ENCODE measurements at regions of chrX and their contacts with region 1.

Region 1: GRCh38 chrX:123833387-123833786 is 26.5 kb upstream of the XIAP start:
- DNase-seq: peak; percentile 68 to 77 (median 70)
- ATAC-seq: peak; percentile 97
- H3K4me3 ChIP-seq: no peak overlapping the region
- H3K27ac ChIP-seq: no peak overlapping the region
- H3K4me1 ChIP-seq: no peaks in the 10 kb centered on the region; a peak in 2 of 5 replicates
- H3K27me3 ChIP-seq: no peaks in the 10 kb centered on the region
- CTCF ChIP-seq: peak; percentile 78 to 90 (median 81)
- EP300 ChIP-seq: no peak
- POLR2A ChIP-seq: no peak
- RAD21 ChIP-seq: peak; percentile 90 to 93

Region 2: DNA sequence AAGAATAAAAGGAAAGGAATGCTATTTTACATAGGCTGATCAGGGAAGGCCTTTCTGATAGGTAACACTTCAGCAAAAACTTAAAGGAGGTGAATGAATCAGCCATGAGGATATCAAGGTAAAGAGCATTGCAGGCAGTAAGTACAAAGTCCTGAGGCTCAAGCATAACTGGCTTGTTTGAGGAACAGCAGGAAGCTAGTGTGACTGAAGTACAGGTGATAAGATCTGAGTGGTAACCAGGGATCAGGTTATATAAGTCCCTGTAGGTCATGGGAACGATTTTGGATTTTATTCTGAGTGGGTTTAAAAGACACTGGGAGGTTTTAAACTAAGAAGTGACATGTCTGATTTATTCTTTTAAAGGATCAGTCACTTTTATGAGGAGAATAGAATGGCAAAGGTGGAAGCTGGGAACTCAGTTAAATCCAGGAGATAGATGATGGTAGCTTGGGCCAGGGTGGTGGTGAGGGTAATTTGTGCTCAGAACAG is 53.4 kb before region 1 on chrX:
- CTCF ChIA-PET with region 1: interaction called, 4 read pairs
- POLR2A ChIA-PET with region 1: no interaction called
- in situ Hi-C with region 1: no loop called
- intact Hi-C with region 1: loop called (anchors 2 kb)
- DNase-seq: peak in 2 of 4 experiments; percentile 27 to 34
- ATAC-seq: peak; percentile 47; the same call in 2 of the 3 replicates
- H3K4me3 ChIP-seq: no peak overlapping the region
- H3K27ac ChIP-seq: no peak overlapping the region
- H3K4me1 ChIP-seq: peaks cover 7 to 13% of the 10 kb centered on the region in 2 experiments; a peak in 4 of 5 replicates
- H3K27me3 ChIP-seq: no peaks in the 10 kb centered on the region
- CTCF ChIP-seq: no peak
- EP300 ChIP-seq: no peak
- POLR2A ChIP-seq: no peak
- RAD21 ChIP-seq: no peak

Region 3: DNA sequence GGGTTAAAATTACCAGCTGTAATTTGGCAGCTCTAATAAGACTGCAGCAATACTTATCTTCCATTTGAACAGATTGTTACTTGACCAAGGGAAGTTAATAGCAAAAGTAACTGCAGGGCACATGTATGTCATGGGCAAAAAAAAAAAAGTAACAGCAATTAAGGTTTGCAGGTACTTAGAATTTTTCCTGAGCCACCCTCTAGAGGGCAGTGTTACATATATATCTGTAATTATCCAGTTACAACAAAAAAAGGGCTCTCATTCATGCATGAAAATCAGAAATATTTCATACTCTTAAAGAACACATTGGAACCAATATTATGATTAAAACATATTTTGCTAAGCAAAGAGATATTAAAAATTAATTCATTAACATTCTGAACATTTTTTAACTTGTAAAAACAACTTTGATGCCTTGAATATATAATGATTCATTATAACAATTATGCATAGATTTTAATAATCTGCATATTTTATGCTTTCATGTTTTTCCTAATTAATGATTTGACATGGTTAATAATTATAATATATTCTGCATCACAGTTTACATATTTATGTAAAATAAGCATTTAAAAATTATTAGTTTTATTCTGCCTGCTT is 51.5 kb after region 1 on chrX:
- CTCF ChIA-PET with region 1: interaction called, 3 read pairs
- POLR2A ChIA-PET with region 1: interaction called, 3 read pairs
- in situ Hi-C with region 1: no loop called
- intact Hi-C with region 1: loop called (anchors 5 kb)
- DNase-seq: peak; percentile 26 to 55 (median 29)
- ATAC-seq: peak; percentile 74
- H3K4me3 ChIP-seq: no peak overlapping the region
- H3K27ac ChIP-seq: no peak overlapping the region
- H3K4me1 ChIP-seq: no peaks in the 10 kb centered on the region
- H3K27me3 ChIP-seq: no peaks in the 10 kb centered on the region
- CTCF ChIP-seq: peak in 2 of 3 experiments; percentile 36 to 65; a peak in 3 of 6 replicates
- EP300 ChIP-seq: no peak
- POLR2A ChIP-seq: no peak
- RAD21 ChIP-seq: peak; percentile 34 to 47; a peak in 3 of 4 replicates

Region 4: DNA sequence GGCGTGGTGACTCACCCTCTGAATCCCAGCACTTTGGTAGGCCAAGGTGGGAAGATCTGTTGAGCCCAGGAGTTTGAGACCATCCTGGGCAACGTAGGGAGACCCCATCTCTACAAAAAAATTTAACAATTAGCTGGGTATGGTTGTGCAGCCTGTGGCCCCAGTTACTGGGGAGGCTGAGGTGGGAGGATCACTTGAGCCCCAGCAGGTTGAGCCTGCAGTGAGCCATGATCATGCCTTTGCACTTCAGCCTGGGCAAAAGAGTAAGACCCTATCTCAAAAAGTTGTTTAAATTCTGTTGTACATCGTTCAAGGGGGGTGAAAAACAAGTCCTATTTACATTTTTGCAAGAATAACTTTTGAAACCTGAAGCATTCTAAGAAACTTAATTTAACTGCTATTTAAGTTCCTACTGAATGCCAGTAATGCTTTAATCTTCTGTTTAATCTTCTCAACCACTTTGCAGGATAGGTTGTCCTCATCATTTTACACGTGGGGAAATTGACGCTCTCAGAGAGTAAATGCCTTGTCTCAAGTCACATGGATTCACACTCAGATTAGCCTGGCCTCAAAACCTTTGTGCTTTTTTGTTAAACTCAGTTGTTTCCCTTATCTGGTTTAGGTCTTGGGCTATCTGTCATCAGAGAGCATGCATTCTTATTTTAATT is 135.1 kb after region 1 on chrX:
- CTCF ChIA-PET with region 1: no interaction called
- POLR2A ChIA-PET with region 1: no interaction called
- in situ Hi-C with region 1: loop called (anchors 5 kb)
- intact Hi-C with region 1: no loop called
- DNase-seq: no peak
- ATAC-seq: peak; percentile 5; the same call in 1 of the 3 replicates
- H3K4me3 ChIP-seq: no peak overlapping the region
- H3K27ac ChIP-seq: no peak overlapping the region
- H3K4me1 ChIP-seq: peaks cover 0 to 5% of the 10 kb centered on the region in 2 experiments; a peak in 2 of 5 replicates
- H3K27me3 ChIP-seq: no peaks in the 10 kb centered on the region
- CTCF ChIP-seq: no peak
- EP300 ChIP-seq: no peak
- POLR2A ChIP-seq: no peak
- RAD21 ChIP-seq: no peak

Region 5: DNA sequence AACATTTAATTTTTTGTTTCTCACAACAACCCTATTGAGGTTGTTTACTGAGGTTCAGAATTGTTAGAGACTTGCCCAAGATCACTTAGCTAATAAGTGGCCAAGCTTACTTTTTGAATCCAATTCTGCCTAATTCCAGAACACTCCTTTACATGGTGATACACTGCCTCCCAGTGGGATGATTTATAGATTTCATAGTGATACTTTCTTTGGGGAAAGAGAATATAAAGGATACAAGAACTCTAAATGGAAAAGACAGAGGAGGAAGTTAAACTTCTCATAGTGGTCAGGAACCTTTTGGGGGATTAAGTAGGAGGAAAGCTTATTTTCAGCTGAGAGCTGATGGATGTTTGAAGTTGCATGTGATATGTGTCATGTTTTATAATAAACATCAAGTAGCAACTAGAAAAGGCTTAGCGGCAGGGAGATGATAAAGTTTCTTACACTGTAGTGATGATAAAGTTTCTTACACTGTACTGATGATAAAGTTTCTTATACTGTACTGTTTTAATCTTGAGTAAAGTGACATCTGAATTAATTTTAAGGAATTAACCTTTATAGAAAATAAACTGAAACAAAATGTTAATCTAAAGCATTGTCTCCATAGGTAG is 143.4 kb after region 1 on chrX:
- CTCF ChIA-PET with region 1: interaction called, 6 read pairs
- POLR2A ChIA-PET with region 1: no interaction called
- in situ Hi-C with region 1: no loop called
- intact Hi-C with region 1: loop called (anchors 2 kb)
- DNase-seq: peak in 2 of 4 experiments; percentile 25 to 53
- ATAC-seq: peak; percentile 73
- H3K4me3 ChIP-seq: no peak overlapping the region
- H3K27ac ChIP-seq: no peak overlapping the region
- H3K4me1 ChIP-seq: peaks cover under 1 to 6% of the 10 kb centered on the region in 2 experiments; a peak in 4 of 5 replicates
- H3K27me3 ChIP-seq: no peaks in the 10 kb centered on the region
- CTCF ChIP-seq: peak; percentile 39 to 62 (median 45); a peak in 4 of 6 replicates
- EP300 ChIP-seq: no peak
- POLR2A ChIP-seq: no peak
- RAD21 ChIP-seq: peak; percentile 66 to 69

Region 6: GRCh38 chrX:124211312-124211942 is 378.0 kb after region 1 on chrX:
- CTCF ChIA-PET with region 1: no interaction called
- POLR2A ChIA-PET with region 1: no interaction called
- in situ Hi-C with region 1: no loop called
- intact Hi-C with region 1: loop called (anchors 1 kb)
- DNase-seq: peak; percentile 15 to 46 (median 23)
- ATAC-seq: peak; percentile 95
- H3K4me3 ChIP-seq: no peak overlapping the region
- H3K27ac ChIP-seq: no peak overlapping the region
- H3K4me1 ChIP-seq: peaks cover 0 to 3% of the 10 kb centered on the region in 2 experiments; a peak in 1 of 5 replicates
- H3K27me3 ChIP-seq: no peaks in the 10 kb centered on the region
- CTCF ChIP-seq: peak; percentile 50 to 63 (median 62); a peak in 5 of 6 replicates
- EP300 ChIP-seq: no peak
- POLR2A ChIP-seq: no peak
- RAD21 ChIP-seq: peak; percentile 53 to 73

Measured in K562 (cell line).